ENCODE measurements at regions of chr4 and their contacts with region 1.

Region 1: DNA sequence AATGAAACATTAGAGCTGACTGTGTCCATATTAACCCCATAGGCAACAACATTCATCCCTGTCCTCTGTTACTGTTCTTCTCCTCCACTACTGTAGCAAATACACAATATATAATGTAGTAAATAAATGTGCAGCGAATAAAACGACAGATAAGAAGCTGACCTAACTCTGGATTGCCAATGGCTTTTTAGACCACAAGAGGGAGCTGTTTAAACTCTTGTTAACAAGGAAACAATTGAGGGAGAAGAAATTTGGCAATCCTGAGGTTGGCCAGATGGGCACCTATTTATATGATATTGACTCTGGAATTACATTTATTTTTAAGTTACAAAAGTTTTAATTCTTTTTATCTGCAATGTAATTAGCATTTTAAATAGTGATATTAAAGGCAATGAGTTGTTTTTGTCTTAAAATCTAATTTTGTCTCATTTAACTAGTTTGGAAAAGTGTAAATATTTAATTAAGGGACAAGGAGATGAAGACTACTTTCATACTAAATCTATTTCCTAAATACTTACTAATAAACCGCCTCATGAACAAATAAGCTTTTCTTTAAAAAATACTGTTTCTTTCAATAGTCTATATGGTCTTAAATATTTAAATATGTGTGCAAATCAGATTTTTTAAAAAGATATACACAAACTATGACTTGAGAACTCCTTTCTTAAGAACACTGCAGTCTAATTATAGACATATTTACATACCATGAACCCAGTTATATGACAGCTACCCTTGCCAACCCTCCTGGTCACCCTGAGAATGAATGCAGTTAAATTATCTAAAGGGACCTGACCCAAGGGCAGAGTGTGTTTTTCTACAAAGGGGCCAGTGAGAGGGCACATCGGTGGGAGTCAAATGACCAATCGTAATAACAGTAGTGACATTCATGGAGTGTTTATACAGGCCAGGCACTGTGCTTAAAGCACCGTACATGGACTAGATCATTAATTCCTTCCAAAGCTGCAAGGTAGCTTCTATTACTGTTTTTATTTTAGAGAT is 52.9 kb upstream of the HPF1 start:
- DNase-seq: peak in 7 of 9 donors; percentile 25 to 63 (median 47)
- ATAC-seq: no peak
- H3K4me3 ChIP-seq: no peak overlapping the region
- H3K4me3 Mint-ChIP-seq: no peak overlapping the region
- H3K27ac ChIP-seq: no peak overlapping the region
- H3K27ac Mint-ChIP-seq: no peak overlapping the region
- H3K4me1 ChIP-seq: no peaks in the 10 kb centered on the region
- H3K4me1 Mint-ChIP-seq: peaks cover 0 to 3% (median 0%) of the 10 kb centered on the region in 7 donors
- H3K27me3 ChIP-seq: no peaks in the 10 kb centered on the region
- H3K27me3 Mint-ChIP-seq: peaks cover 0 to 17% (median 5%) of the 10 kb centered on the region in 5 donors

Region 2: GRCh38 chr4:168076989-168077725 is 1733.5 kb before region 1 on chr4:
- CTCF ChIA-PET with region 1: no interaction called
- POLR2A ChIA-PET with region 1: no interaction called
- intact Hi-C with region 1: no loop called
- DNase-seq: peak in 3 of 9 donors; percentile 9 to 32 (median 13)
- ATAC-seq: no peak
- H3K4me3 ChIP-seq: no peak overlapping the region
- H3K4me3 Mint-ChIP-seq: no peak overlapping the region
- H3K27ac ChIP-seq: no peak overlapping the region
- H3K27ac Mint-ChIP-seq: no peak overlapping the region
- H3K4me1 ChIP-seq: no peaks in the 10 kb centered on the region
- H3K4me1 Mint-ChIP-seq: no peaks in the 10 kb centered on the region
- H3K27me3 ChIP-seq: no peaks in the 10 kb centered on the region
- H3K27me3 Mint-ChIP-seq: peaks cover 0 to 7% (median under 1%) of the 10 kb centered on the region in 5 donors

Region 3: DNA sequence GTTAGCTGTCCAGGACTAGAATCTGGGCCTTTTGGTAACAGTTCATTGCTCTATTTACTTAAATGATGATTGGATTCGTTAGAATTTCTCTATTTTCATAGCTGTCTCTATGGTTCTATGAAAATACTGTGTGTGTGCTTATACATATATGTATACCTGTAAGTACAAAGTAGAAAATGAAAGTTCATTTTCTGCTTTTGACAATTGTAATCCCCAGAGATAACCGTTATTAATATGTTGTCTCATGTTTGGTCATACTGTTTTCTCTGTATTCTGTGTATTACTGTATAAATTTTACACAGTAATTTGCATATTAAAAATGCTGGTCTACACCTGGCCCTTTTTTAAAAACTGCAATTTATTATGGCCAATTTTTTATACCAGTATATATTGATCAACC is 134.8 kb before region 1 on chr4:
- CTCF ChIA-PET with region 1: interaction called, 11 read pairs
- POLR2A ChIA-PET with region 1: no interaction called
- intact Hi-C with region 1: no loop called
- DNase-seq: no peak
- ATAC-seq: no peak
- H3K4me3 ChIP-seq: no peak overlapping the region
- H3K4me3 Mint-ChIP-seq: no peak overlapping the region
- H3K27ac ChIP-seq: no peak overlapping the region
- H3K27ac Mint-ChIP-seq: no peak overlapping the region
- H3K4me1 ChIP-seq: no peaks in the 10 kb centered on the region
- H3K4me1 Mint-ChIP-seq: peaks cover 0 to 19% (median 5%) of the 10 kb centered on the region in 7 donors
- H3K27me3 ChIP-seq: no peaks in the 10 kb centered on the region
- H3K27me3 Mint-ChIP-seq: no peaks in the 10 kb centered on the region

Region 4: GRCh38 chr4:170047771-170048354 is 237.2 kb after region 1 on chr4:
- CTCF ChIA-PET with region 1: interaction called, 34 read pairs
- POLR2A ChIA-PET with region 1: no interaction called
- intact Hi-C with region 1: loop called (anchors 1 kb)
- DNase-seq: peak; percentile 10 to 68 (median 51)
- ATAC-seq: peak; percentile 48
- H3K4me3 ChIP-seq: no peak overlapping the region
- H3K4me3 Mint-ChIP-seq: no peak overlapping the region
- H3K27ac ChIP-seq: no peak overlapping the region
- H3K27ac Mint-ChIP-seq: peak overlapping the region in 1 of 9 donors; percentile 77
- H3K4me1 ChIP-seq: no peaks in the 10 kb centered on the region
- H3K4me1 Mint-ChIP-seq: no peaks in the 10 kb centered on the region
- H3K27me3 ChIP-seq: no peaks in the 10 kb centered on the region
- H3K27me3 Mint-ChIP-seq: peaks cover 0 to 3% (median 0%) of the 10 kb centered on the region in 5 donors

Measured in naive thymus-derived CD4-positive, alpha-beta T cell (primary cell).